ENCODE measurements at regions of chr7 and their contacts with region 1.

Region 1: DNA sequence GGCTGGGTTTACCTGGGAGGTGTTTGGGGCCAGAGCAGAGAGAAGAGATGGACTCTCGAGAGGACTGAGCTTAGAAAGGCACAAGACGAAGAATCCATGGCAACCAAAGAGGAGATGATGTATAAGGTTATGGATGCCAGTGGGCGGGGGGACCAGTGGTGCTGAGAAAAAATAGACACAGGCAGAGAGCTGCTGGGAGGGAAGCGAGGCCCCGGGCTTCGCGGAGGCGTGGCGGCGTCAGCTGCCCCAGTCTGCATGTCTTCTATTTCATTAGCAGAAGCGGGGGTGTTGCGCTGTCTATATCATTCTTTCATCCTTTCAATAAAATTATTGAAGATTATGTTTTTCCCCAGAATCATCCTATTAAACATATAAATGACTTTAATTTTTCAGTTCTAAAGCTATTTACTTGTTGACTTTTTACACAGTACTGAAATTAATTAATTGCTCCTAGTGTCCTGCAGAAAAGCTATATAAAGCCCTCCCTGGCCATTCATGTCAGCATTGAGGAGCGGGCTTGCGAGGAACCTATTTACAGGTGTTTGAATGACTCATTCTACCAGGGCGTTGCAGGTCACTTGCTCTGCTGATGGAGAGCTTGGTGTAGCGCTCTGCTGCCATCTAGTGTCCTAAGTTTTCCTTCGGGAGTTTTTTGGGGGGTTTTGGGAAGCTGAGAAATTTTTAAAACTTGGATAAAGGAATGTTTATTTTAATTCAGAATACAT is 42.9 kb upstream of the BHLHA15 start:
- DNase-seq: peak; percentile 81
- H3K4me3 Mint-ChIP-seq: no peak overlapping the region
- H3K27ac Mint-ChIP-seq: no peak overlapping the region
- H3K4me1 Mint-ChIP-seq: peaks cover 11% of the 10 kb centered on the region
- H3K27me3 Mint-ChIP-seq: no peaks in the 10 kb centered on the region

Region 2: GRCh38 chr7:97971990-97972943 is 196.1 kb before region 1 on chr7:
- CTCF ChIA-PET with region 1: interaction called, 4 read pairs
- intact Hi-C with region 1: loop called (anchors 2 kb)
- DNase-seq: peak; percentile 91
- H3K4me3 Mint-ChIP-seq: peak overlapping the region; percentile 94
- H3K27ac Mint-ChIP-seq: peak overlapping the region; percentile 95
- H3K4me1 Mint-ChIP-seq: peaks cover 27% of the 10 kb centered on the region
- H3K27me3 Mint-ChIP-seq: no peaks in the 10 kb centered on the region

Region 3: GRCh38 chr7:98014352-98014751 is 154.0 kb before region 1 on chr7:
- CTCF ChIA-PET with region 1: interaction called, 223 read pairs
- intact Hi-C with region 1: no loop called
- DNase-seq: no peak
- H3K4me3 Mint-ChIP-seq: no peak overlapping the region
- H3K27ac Mint-ChIP-seq: no peak overlapping the region
- H3K4me1 Mint-ChIP-seq: no peaks in the 10 kb centered on the region
- H3K27me3 Mint-ChIP-seq: peaks cover 5% of the 10 kb centered on the region

Region 4: DNA sequence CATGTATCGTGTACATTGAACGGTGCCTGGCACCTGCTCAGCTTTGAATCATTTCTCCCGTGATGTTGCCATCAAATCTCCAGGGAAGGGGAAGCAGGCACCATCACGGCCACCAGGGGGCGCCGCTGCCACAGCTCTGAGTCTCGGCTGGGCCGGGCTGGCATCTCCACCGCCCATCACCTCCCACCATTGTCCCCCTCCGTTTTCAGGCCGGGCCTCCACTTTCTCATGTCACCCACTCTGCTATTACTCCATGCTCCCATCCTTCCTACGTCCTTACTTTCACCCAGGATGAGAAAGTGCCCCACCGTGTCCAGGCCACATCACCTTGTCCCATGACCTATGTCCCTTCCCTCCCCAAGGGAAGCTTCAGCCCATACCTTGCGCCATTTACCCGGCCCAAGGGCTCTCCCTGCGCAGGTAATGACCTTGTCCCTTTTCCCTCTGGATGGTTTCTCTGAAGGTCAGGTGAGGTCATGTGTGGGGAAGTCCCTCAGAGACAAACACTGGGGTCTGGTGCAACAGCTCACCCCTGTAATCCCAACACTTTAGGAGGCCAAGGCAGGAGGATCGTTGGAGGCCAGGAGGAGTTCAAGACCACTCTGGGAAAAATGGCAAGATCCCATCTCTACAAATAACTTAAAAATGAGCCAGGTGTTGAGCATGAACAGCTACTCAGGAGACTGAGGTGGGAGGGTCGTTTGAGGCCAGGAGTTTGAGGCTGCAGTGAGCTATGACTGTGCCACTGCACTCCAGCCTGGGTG is 146.6 kb before region 1 on chr7:
- CTCF ChIA-PET with region 1: interaction called, 223 read pairs
- intact Hi-C with region 1: loop called (anchors 1 kb)
- DNase-seq: peak; percentile 89
- H3K4me3 Mint-ChIP-seq: no peak overlapping the region
- H3K27ac Mint-ChIP-seq: no peak overlapping the region
- H3K4me1 Mint-ChIP-seq: peaks cover 2% of the 10 kb centered on the region
- H3K27me3 Mint-ChIP-seq: peaks cover 3% of the 10 kb centered on the region

Region 5: DNA sequence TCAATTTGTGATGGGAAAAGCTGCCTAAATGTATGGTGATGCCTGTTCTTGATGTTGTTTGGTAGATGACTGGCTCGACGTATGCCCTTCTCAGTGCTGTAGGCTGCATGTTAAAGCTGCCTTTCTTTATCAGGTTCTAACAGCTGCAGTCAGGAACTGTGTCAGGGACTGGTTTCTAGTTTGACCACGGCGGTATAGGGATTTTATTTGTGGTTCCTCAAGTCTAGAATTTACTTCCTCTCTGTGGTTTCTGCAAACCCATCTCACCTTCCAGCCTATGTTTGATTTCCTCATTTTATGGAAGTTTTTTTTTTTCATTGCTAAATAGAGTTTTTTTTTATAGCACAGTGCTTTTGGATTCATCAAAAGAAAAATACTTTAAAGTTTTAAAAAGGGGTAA is 35.2 kb before region 1 on chr7:
- CTCF ChIA-PET with region 1: interaction called, 13 read pairs
- intact Hi-C with region 1: loop called (anchors 1 kb)
- DNase-seq: peak; percentile 41
- H3K4me3 Mint-ChIP-seq: no peak overlapping the region
- H3K27ac Mint-ChIP-seq: no peak overlapping the region
- H3K4me1 Mint-ChIP-seq: peaks cover 48% of the 10 kb centered on the region
- H3K27me3 Mint-ChIP-seq: no peaks in the 10 kb centered on the region

Region 6: GRCh38 chr7:98149116-98149692 is 19.1 kb before region 1 on chr7:
- CTCF ChIA-PET with region 1: interaction called, 10 read pairs
- intact Hi-C with region 1: no loop called
- DNase-seq: no peak
- H3K4me3 Mint-ChIP-seq: no peak overlapping the region
- H3K27ac Mint-ChIP-seq: no peak overlapping the region
- H3K4me1 Mint-ChIP-seq: no peaks in the 10 kb centered on the region
- H3K27me3 Mint-ChIP-seq: no peaks in the 10 kb centered on the region

Region 7: DNA sequence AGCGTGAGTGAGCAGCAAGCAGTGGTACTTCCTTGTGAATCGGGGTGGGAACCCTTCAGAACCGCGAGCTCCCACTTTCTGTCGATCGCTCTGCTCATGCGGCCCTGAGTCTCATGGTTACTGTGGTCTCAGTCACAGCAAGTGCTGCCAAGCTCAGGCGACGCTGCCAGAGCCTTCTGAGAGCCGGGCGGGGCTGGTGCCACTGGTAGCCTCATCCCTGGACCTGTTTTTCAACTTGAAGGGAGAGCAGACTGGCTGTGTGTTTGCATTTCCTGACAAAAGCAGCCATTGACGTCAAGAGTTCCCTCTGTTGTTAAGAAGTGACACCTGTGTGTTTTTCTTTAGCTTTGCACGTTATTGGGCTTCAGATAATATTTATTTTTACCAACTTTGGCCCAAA is 10.0 kb after region 1 on chr7:
- CTCF ChIA-PET with region 1: interaction called, 24 read pairs
- intact Hi-C with region 1: no loop called
- DNase-seq: no peak
- H3K4me3 Mint-ChIP-seq: no peak overlapping the region
- H3K27ac Mint-ChIP-seq: no peak overlapping the region
- H3K4me1 Mint-ChIP-seq: no peaks in the 10 kb centered on the region
- H3K27me3 Mint-ChIP-seq: no peaks in the 10 kb centered on the region